ENCODE measurements at regions of chr6 and their contacts with region 1.

Region 1: GRCh38 chr6:118283766-118284165 is 264.3 kb upstream of the PLN start:
- DNase-seq: peak; percentile 70
- H3K4me3 ChIP-seq: no peak overlapping the region
- H3K27ac ChIP-seq: no peak overlapping the region
- H3K4me1 ChIP-seq: no peaks in the 10 kb centered on the region
- H3K27me3 ChIP-seq: no peaks in the 10 kb centered on the region
- CTCF ChIP-seq: peak; percentile 85

Region 2: DNA sequence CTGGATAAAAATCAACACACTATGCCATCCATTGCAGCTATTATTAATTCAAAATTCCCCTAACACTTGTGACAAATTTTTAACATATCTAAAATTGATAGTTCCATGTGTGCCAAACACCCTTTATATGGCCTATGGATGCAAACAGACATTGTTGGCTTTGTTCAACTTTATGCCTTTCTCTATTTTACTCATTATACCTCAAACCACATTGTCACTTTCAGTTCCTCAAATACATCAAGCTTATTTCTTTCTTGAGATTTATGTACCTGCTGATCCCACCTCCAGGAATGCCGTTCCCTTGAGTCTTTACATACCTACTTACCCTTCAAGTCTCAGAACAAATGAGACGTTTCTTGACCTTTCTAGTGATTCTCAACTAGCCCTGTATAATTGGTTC is 70.9 kb after region 1 on chr6:
- CTCF ChIA-PET with region 1: no interaction called
- POLR2A ChIA-PET with region 1: no interaction called
- intact Hi-C with region 1: no loop called
- DNase-seq: no peak
- H3K4me3 ChIP-seq: no peak overlapping the region
- H3K27ac ChIP-seq: no peak overlapping the region
- H3K4me1 ChIP-seq: no peaks in the 10 kb centered on the region
- H3K27me3 ChIP-seq: peaks cover 11% of the 10 kb centered on the region
- CTCF ChIP-seq: no peak

Region 3: GRCh38 chr6:118372413-118372812 is 88.6 kb after region 1 on chr6:
- CTCF ChIA-PET with region 1: no interaction called
- POLR2A ChIA-PET with region 1: no interaction called
- intact Hi-C with region 1: no loop called
- DNase-seq: no peak
- H3K4me3 ChIP-seq: no peak overlapping the region
- H3K27ac ChIP-seq: no peak overlapping the region
- H3K4me1 ChIP-seq: no peaks in the 10 kb centered on the region
- H3K27me3 ChIP-seq: peaks cover 12% of the 10 kb centered on the region
- CTCF ChIP-seq: no peak

Region 4: GRCh38 chr6:118509009-118509617 is 225.3 kb after region 1 on chr6:
- CTCF ChIA-PET with region 1: no interaction called
- POLR2A ChIA-PET with region 1: no interaction called
- intact Hi-C with region 1: loop called (anchors 2 kb)
- DNase-seq: peak; percentile 31
- H3K4me3 ChIP-seq: no peak overlapping the region
- H3K27ac ChIP-seq: no peak overlapping the region
- H3K4me1 ChIP-seq: no peaks in the 10 kb centered on the region
- H3K27me3 ChIP-seq: no peaks in the 10 kb centered on the region
- CTCF ChIP-seq: peak; percentile 81

Region 5: GRCh38 chr6:118580585-118581419 is 297.0 kb after region 1 on chr6:
- CTCF ChIA-PET with region 1: interaction called, 3 read pairs
- POLR2A ChIA-PET with region 1: no interaction called
- intact Hi-C with region 1: loop called (anchors 1 kb)
- DNase-seq: peak; percentile 80
- H3K4me3 ChIP-seq: no peak overlapping the region
- H3K27ac ChIP-seq: no peak overlapping the region
- H3K4me1 ChIP-seq: no peaks in the 10 kb centered on the region
- H3K27me3 ChIP-seq: no peaks in the 10 kb centered on the region
- CTCF ChIP-seq: peak; percentile 75

Region 6: DNA sequence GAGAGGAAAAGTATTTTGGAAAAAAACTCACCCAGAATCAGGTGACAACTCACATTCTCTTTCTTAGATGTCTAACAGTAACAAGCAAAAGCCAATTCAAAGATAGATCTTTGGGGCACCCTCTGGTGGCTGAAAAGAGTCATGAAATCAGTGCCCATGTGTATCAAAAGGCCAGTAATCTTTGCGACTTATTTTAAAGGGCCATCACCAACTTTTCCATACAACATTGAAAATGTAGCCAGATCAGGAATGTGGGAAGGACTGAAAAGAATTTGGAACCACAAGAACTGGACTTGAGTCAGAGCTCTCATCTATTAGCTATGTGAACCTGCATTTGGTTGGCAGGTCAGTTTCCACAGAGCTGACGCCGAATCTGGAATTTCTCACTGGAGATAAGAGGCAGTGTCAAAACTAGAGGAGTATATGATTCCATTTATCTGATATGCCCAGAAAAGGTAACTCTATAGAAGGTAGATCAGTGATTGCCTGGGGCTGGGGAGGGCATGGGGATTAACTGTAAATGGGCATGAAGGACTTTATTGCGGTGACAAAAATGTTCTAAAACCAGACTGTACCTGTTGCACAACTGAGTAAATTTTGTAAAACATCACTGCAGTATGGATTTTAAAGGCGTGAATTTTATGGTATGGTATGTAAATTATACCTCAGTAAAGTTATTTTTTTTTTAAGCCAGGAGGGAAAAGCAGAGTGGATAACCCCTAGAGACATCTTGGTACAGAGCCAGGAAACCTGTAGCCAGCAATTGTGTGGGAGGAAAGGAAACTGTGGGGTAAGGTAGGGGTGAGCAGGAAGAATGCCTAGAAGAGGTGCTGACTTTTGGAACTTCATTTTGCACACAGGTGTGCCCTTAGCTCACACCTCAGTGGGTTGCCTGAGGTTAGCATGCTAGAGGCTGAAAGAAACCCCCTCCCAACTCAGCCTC is 493.1 kb after region 1 on chr6:
- CTCF ChIA-PET with region 1: no interaction called
- POLR2A ChIA-PET with region 1: no interaction called
- intact Hi-C with region 1: loop called (anchors 5 kb)
- DNase-seq: peak; percentile 79
- H3K4me3 ChIP-seq: no peak overlapping the region
- H3K27ac ChIP-seq: no peak overlapping the region
- H3K4me1 ChIP-seq: no peaks in the 10 kb centered on the region
- H3K27me3 ChIP-seq: no peaks in the 10 kb centered on the region
- CTCF ChIP-seq: peak; percentile 85

Region 7: GRCh38 chr6:119110601-119111548 is 827.1 kb after region 1 on chr6:
- CTCF ChIA-PET with region 1: no interaction called
- POLR2A ChIA-PET with region 1: no interaction called
- intact Hi-C with region 1: loop called (anchors 10 kb)
- DNase-seq: peak; percentile 64
- H3K4me3 ChIP-seq: no peak overlapping the region
- H3K27ac ChIP-seq: no peak overlapping the region
- H3K4me1 ChIP-seq: no peaks in the 10 kb centered on the region
- H3K27me3 ChIP-seq: peaks cover 4% of the 10 kb centered on the region
- CTCF ChIP-seq: peak; percentile 62

Measured in A673 (cell line).